ENCODE measurements at regions of chrX and their contacts with region 1.

Region 1: DNA sequence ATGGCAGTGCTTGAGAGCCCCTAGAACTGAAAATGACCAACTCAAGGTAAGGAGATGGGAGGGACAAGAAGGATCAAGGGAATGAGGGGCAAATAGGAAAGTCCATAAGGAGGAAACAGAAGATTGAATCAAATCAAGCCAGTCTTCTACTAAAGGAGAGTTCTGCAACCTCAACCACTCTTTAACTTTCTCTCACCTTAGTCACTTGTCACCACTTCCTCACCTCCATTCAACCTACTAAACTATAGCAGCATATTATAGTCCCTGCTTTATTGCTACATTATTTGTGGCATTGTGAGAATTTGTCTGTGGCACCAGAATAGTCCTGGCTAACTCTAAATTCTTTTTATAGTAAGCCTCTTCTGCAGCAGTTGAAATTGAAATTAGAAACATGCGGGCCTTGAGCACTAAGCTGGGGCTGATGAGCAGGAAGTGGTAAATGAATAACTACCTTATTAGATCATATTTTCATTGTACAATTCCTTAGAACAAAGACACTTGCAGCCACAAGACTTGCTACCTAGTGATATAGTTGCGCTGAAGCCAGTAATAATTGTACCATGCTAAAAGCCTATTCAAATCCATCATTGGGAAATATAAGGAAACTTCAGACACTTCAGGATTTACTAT is 336.9 kb downstream of the ZNF674 start:
- DNase-seq: peak; percentile 60
- ATAC-seq: peak; percentile 33; the same call in 1 of the 2 replicates
- H3K4me3 ChIP-seq: no peak overlapping the region
- H3K27ac ChIP-seq: peak overlapping the region; percentile 70
- H3K4me1 ChIP-seq: peaks cover 44% of the 10 kb centered on the region
- H3K27me3 ChIP-seq: no peaks in the 10 kb centered on the region
- CTCF ChIP-seq: no peak

Region 2: DNA sequence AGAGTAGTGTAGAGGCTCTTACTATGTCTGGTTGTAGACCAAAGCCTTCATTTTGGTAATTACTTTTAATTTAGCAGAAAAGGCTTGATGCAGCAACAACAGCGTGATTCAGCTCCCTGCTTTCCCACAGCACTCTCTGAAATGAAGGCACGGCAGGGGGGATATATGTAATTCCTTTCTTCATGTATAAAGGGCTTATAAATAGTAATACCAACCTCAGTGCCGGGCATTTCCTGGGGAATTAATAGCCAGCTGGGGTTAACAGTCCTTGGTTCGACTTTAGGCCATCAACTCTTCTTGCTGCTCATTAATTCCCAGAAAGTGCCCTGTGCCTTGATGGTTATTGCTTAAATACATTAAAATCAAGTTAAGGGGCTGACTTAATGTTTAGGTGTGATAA is 332.1 kb before region 1 on chrX:
- CTCF ChIA-PET with region 1: no interaction called
- POLR2A ChIA-PET with region 1: no interaction called
- intact Hi-C with region 1: no loop called
- DNase-seq: no peak
- ATAC-seq: no peak
- H3K4me3 ChIP-seq: no peak overlapping the region
- H3K27ac ChIP-seq: no peak overlapping the region
- H3K4me1 ChIP-seq: no peaks in the 10 kb centered on the region
- H3K27me3 ChIP-seq: no peaks in the 10 kb centered on the region
- CTCF ChIP-seq: no peak

Region 3: DNA sequence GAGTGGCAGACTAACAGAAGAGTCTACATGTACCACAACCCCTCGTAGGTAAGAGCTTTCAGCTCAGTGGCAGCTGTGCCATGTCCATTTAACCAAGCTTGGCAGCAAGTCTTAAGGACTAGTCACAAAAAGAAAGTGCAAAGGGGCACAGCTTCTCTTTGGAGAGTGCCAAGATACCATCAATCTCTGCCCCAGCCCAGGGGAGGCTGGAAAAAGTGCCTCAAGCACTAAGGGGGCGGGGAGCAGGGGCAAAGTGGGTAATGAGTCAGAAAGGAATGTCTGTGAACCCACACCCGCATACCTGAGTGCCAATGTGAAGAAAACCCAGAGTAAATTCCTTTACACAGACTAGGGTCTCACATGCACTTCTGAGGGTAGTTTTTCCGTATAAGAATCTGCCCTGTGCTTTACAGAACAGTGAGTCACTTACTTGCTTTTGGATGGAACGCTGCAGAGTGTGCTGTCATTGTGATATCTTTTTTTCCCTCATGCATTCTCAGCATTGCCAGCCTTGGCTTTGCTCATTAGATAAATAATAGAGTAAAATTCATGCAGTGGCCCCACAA is 117.1 kb after region 1 on chrX:
- CTCF ChIA-PET with region 1: no interaction called
- POLR2A ChIA-PET with region 1: interaction called, 4 read pairs
- intact Hi-C with region 1: loop called (anchors 5 kb)
- DNase-seq: peak; percentile 96
- ATAC-seq: peak; percentile 83
- H3K4me3 ChIP-seq: peak overlapping the region; percentile 64
- H3K27ac ChIP-seq: peak overlapping the region; percentile 98
- H3K4me1 ChIP-seq: peaks cover 52% of the 10 kb centered on the region
- H3K27me3 ChIP-seq: no peaks in the 10 kb centered on the region
- CTCF ChIP-seq: no peak